A673 (cell line): ENCODE measurements at regions of chr1 and their contacts with region 1.

Region 1: GRCh38 chr1:15843826-15844572 is 3.5 kb upstream of the SPEN start:
- DNase-seq: peak; percentile 67
- H3K4me3 ChIP-seq: peak overlapping the region; percentile 2
- H3K27ac ChIP-seq: peak overlapping the region; percentile 26
- H3K4me1 ChIP-seq: peaks cover 18% of the 10 kb centered on the region
- H3K27me3 ChIP-seq: no peaks in the 10 kb centered on the region
- CTCF ChIP-seq: no peak

Region 2: GRCh38 chr1:15825800-15826199 is 18.2 kb before region 1 on chr1:
- CTCF ChIA-PET with region 1: no interaction called
- POLR2A ChIA-PET with region 1: interaction called, 25 read pairs
- intact Hi-C with region 1: no loop called
- DNase-seq: no peak
- H3K4me3 ChIP-seq: no peak overlapping the region
- H3K27ac ChIP-seq: no peak overlapping the region
- H3K4me1 ChIP-seq: no peaks in the 10 kb centered on the region
- H3K27me3 ChIP-seq: no peaks in the 10 kb centered on the region
- CTCF ChIP-seq: no peak

Region 3: GRCh38 chr1:17355898-17356297 is 1511.9 kb after region 1 on chr1:
- CTCF ChIA-PET with region 1: no interaction called
- POLR2A ChIA-PET with region 1: no interaction called
- intact Hi-C with region 1: no loop called
- DNase-seq: no peak
- H3K4me3 ChIP-seq: no peak overlapping the region
- H3K27ac ChIP-seq: no peak overlapping the region
- H3K4me1 ChIP-seq: no peaks in the 10 kb centered on the region
- H3K27me3 ChIP-seq: no peaks in the 10 kb centered on the region
- CTCF ChIP-seq: no peak